ENCODE measurements at regions of chrX and their contacts with region 1.

Region 1: DNA sequence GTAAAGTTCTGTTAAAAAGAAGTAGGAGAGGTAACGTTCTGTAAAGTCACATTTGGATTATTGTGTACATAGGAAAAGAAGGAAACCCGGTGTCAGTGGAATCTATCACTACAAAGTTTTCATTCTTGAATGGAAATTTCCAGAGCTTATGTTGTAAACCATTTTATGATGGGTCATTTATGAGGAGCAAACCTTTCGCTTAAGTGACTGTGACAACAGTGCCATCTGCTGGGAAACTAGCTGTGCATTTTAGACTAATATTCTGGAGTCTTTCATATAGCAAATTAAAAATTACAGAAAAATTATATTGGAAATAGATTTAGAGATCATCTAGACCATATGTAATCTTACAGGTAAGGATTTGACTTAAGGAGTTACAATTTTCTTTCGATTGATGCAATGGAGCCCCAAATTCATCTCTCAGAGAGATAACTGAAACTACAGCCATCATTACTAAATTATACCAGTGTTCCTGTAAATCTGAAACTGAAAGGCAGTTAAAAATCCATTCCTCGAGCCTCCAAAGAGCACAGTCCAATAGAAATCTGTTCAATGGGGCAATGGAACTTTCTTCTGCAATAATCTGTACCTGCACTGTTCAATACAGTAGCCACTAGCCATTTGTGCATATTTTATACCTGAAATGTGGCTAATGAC is 26.9 kb downstream of the ASB9 start:
- H3K4me3 Mint-ChIP-seq: no peak overlapping the region
- H3K27ac Mint-ChIP-seq: no peak overlapping the region
- H3K4me1 Mint-ChIP-seq: no peaks in the 10 kb centered on the region
- H3K27me3 Mint-ChIP-seq: no peaks in the 10 kb centered on the region

Region 2: GRCh38 chrX:14039344-14039743 is 1203.7 kb before region 1 on chrX:
- intact Hi-C with region 1: loop called (anchors 2 kb)
- H3K4me3 Mint-ChIP-seq: no peak overlapping the region
- H3K27ac Mint-ChIP-seq: no peak overlapping the region
- H3K4me1 Mint-ChIP-seq: no peaks in the 10 kb centered on the region
- H3K27me3 Mint-ChIP-seq: no peaks in the 10 kb centered on the region

Region 3: DNA sequence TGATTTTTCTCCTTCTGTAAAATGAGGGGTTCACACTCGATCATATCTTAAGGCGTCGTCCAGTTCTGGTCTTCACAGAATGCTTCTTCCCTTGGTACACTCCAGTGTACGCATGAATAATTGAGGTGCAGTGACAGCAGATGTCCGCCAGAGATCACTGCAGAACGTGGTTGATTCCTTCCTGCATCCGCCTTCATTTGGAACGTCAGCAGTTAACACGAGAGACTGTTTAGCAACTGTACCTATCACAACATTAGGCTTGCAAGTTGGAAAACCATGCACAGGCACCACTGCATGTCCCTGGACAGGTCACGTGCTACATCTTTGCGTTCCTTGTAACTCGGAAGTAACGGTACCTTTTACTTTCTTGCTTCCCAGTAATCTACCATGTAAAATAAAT is 1147.3 kb before region 1 on chrX:
- intact Hi-C with region 1: loop called (anchors 5 kb)
- H3K4me3 Mint-ChIP-seq: no peak overlapping the region
- H3K27ac Mint-ChIP-seq: no peak overlapping the region
- H3K4me1 Mint-ChIP-seq: no peaks in the 10 kb centered on the region
- H3K27me3 Mint-ChIP-seq: no peaks in the 10 kb centered on the region

Region 4: DNA sequence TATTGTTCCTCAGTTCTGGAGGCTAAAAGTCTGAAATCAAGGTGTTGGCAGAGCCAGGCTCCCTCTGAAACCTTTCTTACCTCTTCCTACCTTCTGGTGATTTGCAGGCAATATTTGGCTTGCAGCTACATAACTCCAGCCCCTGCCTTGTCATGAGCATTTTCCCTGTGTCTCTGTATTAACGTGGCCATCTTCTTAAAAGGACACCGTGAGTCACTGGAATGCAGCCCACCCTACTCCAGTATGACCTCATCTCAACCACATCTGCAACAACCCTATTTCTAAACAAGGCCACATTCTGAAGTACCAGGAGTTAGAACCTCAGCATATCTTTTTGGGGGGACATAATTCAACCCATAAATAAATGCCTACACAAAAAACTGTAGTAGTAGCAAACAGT is 410.9 kb before region 1 on chrX:
- intact Hi-C with region 1: no loop called
- H3K4me3 Mint-ChIP-seq: no peak overlapping the region
- H3K27ac Mint-ChIP-seq: no peak overlapping the region
- H3K4me1 Mint-ChIP-seq: no peaks in the 10 kb centered on the region
- H3K27me3 Mint-ChIP-seq: no peaks in the 10 kb centered on the region

Region 5: GRCh38 chrX:15107367-15107988 is 135.5 kb before region 1 on chrX:
- intact Hi-C with region 1: loop called (anchors 5 kb)
- H3K4me3 Mint-ChIP-seq: no peak overlapping the region
- H3K27ac Mint-ChIP-seq: no peak overlapping the region
- H3K4me1 Mint-ChIP-seq: no peaks in the 10 kb centered on the region
- H3K27me3 Mint-ChIP-seq: no peaks in the 10 kb centered on the region

Region 6: DNA sequence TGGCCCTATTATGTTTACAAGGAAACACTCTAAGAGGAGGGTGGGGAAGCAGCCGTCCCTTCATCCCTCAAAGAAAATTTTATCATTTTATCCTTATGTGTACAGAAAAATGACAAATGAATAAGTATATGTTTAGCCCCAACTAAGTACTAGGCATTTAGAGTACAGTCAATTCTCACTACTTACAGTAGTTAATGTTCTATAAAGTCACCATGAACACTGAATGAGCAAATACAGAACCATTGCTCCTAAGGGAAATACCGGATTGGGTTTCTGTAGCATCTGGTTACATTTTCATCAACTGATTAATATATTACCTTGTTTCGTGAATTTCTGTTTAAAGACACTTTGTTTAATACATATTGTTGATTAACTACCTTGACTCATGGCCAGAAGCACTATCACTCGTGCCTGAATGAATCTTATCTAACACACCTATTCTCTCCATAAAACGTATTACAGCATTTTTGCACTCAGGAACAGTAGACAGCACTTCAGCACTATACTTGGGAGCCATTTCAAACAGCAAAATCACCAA is 82.4 kb before region 1 on chrX:
- intact Hi-C with region 1: no loop called
- H3K4me3 Mint-ChIP-seq: no peak overlapping the region
- H3K27ac Mint-ChIP-seq: no peak overlapping the region
- H3K4me1 Mint-ChIP-seq: peaks cover 12% of the 10 kb centered on the region
- H3K27me3 Mint-ChIP-seq: peaks cover 2% of the 10 kb centered on the region

Region 7: GRCh38 chrX:15564981-15565579 is 322.1 kb after region 1 on chrX:
- intact Hi-C with region 1: no loop called
- H3K4me3 Mint-ChIP-seq: no peak overlapping the region
- H3K27ac Mint-ChIP-seq: no peak overlapping the region
- H3K4me1 Mint-ChIP-seq: no peaks in the 10 kb centered on the region
- H3K27me3 Mint-ChIP-seq: no peaks in the 10 kb centered on the region